ENCODE measurements at regions of chr14 and their contacts with region 1.

Region 1: DNA sequence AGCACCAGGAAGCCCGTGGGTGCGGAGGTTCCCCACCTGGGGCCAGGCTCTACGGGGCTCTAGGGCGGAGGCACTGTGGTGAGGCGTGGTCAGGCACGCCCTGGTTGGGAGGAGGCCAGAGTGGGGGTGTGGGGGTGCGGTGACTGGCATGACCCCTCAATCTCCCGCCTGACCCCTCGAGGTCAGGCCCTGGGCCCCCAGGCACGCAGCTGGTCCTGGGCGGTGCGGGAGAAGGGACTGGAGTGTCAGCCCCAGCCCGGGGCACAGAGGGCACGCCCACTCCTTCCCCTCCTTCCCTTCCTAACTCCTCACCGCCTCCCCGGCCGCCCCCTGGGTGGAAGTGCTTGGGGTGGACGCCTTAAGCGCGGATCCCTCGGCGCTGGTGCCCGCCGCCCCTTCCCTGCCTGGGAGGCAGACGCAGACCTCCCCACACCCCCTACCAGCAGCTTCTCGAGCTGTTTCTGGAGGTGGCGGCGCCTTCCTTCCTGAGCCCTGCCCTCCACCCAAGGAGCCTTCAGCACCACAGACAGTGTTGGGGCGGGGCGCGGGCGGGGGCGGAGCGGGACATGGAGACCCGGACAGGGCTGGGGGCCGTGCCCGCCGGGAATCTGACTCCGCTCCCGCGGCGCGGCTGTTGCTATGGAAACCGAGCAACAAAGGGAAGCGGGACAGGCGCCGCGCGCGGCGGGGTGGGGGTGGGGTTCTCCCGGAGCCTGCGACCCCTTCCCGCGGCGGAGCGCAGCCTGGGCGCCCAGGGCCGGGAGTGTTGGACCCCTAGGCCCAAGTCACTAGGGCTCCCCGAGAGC is 741 bp upstream of the CRIP2 start:
- DNase-seq: peak; percentile 82 to 90 (median 88)
- H3K4me3 ChIP-seq: peak overlapping the region; percentile 45
- H3K27ac ChIP-seq: peak overlapping the region in 1 of 2 donors; percentile 42
- H3K4me1 ChIP-seq: peaks cover 17% of the 10 kb centered on the region
- H3K27me3 ChIP-seq: no peaks in the 10 kb centered on the region
- CTCF ChIP-seq: no peak
- EP300 ChIP-seq: no peak
- POLR2A ChIP-seq: no peak

Region 2: DNA sequence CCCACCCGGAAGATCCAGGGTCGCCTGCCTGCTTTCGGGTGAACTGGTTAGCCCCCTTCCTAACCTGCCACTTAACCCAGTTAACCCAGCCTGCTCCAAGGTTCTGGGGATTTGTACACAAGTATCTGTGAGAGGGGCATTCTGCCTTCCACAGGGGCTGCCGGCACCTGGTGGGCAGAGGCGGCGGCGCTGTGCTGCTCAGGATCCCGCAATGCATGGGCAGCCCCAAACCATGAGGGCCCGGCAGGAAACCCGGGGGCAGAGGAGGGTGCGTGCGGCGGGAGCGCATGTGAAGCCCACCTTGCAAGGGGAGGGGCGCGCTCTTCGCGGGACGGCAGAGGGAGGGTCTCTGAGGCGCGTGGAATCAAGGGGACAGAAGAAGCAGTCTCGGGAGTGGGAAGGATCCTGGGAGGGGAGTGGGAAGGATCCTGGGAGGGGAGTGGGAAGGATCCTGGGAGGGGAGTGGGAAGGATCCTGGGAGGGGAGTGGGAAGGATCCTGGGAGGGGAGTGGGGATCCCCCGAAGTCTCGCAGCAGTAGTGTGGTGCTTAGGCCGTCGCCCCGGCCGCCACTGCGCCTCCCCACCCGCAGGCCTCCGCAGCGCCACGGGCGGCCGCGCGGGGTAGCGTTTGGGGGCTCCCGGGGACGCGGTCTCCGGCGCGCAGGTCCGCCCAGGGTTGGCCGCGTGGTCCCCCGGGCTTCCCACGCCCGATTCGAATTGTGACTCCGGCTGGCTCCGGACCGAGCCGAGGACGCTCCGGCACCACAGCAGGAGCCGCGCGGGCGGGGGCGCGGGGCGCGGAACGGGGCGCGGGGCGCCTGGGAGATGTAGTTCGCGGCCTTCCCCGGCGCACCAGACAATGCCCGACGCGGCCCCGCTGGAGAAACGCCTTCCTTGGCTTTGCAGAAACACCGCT is 59.2 kb before region 1 on chr14:
- intact Hi-C with region 1: loop called in 1 of 4 experiments (anchors 10 kb)
- DNase-seq: peak; percentile 62 to 85 (median 77)
- H3K4me3 ChIP-seq: peak overlapping the region; percentile 42
- H3K27ac ChIP-seq: peak overlapping the region in 1 of 2 donors; percentile 30
- H3K4me1 ChIP-seq: peaks cover 8% of the 10 kb centered on the region
- H3K27me3 ChIP-seq: no peaks in the 10 kb centered on the region
- CTCF ChIP-seq: peak; percentile 59 to 89 (median 83)
- EP300 ChIP-seq: no peak
- POLR2A ChIP-seq: no peak

Region 3: GRCh38 chr14:105577314-105577861 is 103.5 kb after region 1 on chr14:
- intact Hi-C with region 1: no loop called
- DNase-seq: no peak
- H3K4me3 ChIP-seq: no peak overlapping the region
- H3K27ac ChIP-seq: no peak overlapping the region
- H3K4me1 ChIP-seq: no peaks in the 10 kb centered on the region
- H3K27me3 ChIP-seq: no peaks in the 10 kb centered on the region
- CTCF ChIP-seq: no peak
- EP300 ChIP-seq: no peak
- POLR2A ChIP-seq: no peak

Measured in ovary (tissue), 10 donors.